IMR-90 (cell line): ENCODE measurements at regions of chr19 and their contacts with region 1.

Region 1: DNA sequence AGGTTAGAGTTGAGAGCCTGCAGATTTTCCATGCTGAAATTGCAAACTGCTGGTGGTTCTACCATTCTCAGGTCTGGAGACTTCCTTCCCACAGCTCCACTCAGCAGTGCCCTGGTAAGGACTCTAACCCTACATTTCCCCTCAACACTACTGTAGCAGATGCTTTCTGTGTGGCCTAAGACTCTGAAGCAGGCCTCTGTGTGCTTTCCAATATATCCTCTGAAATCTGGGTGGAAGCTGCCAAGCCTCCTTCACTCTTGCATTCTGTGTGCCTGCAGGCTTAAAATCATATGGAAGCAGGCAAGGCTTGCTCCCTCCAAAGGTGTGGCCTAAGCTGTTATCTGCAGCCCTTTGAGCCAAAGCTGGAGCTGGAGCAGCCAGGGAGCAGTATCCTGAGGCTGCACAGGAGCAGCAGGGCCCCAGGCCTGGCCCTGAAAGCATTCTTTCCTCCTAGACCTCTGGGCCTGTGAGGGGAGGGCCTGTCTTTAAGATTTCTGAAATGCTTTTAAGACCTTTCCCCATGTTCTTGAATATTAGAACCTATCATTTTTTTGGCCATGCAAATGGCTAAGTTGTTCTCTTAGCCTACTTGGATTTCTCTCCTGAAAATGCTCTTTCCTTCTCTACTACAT is 134.1 kb upstream of the TSHZ3 start:
- DNase-seq: no peak
- ATAC-seq: no peak
- H3K4me3 ChIP-seq: no peak overlapping the region
- H3K27ac ChIP-seq: no peak overlapping the region
- H3K4me1 ChIP-seq: no peaks in the 10 kb centered on the region
- H3K27me3 ChIP-seq: no peaks in the 10 kb centered on the region
- CTCF ChIP-seq: no peak
- POLR2A ChIP-seq: no peak
- RAD21 ChIP-seq: no peak

Region 2: GRCh38 chr19:31285744-31286143 is 197.6 kb before region 1 on chr19:
- CTCF ChIA-PET with region 1: no interaction called
- POLR2A ChIA-PET with region 1: no interaction called
- dilution Hi-C with region 1: no loop called
- in situ Hi-C with region 1: no loop called
- intact Hi-C with region 1: no loop called
- DNase-seq: peak; percentile 64
- ATAC-seq: peak; percentile 69
- H3K4me3 ChIP-seq: no peak overlapping the region
- H3K27ac ChIP-seq: peak overlapping the region; percentile 10; the same call in 1 of the 2 replicates
- H3K4me1 ChIP-seq: peaks cover 12% of the 10 kb centered on the region
- H3K27me3 ChIP-seq: no peaks in the 10 kb centered on the region
- CTCF ChIP-seq: no peak
- POLR2A ChIP-seq: no peak
- RAD21 ChIP-seq: no peak

Region 3: GRCh38 chr19:31504221-31504620 is 20.9 kb after region 1 on chr19:
- CTCF ChIA-PET with region 1: no interaction called
- POLR2A ChIA-PET with region 1: no interaction called
- dilution Hi-C with region 1: no loop called
- in situ Hi-C with region 1: no loop called
- intact Hi-C with region 1: loop called (anchors 1 kb)
- DNase-seq: no peak
- ATAC-seq: no peak
- H3K4me3 ChIP-seq: no peak overlapping the region
- H3K27ac ChIP-seq: no peak overlapping the region
- H3K4me1 ChIP-seq: no peaks in the 10 kb centered on the region
- H3K27me3 ChIP-seq: peaks cover 3% of the 10 kb centered on the region; the same call in 1 of the 2 replicates
- CTCF ChIP-seq: no peak
- POLR2A ChIP-seq: no peak
- RAD21 ChIP-seq: no peak

Region 4: GRCh38 chr19:31560086-31561060 is 77.0 kb after region 1 on chr19:
- CTCF ChIA-PET with region 1: no interaction called
- POLR2A ChIA-PET with region 1: no interaction called
- dilution Hi-C with region 1: no loop called
- in situ Hi-C with region 1: no loop called
- intact Hi-C with region 1: no loop called
- DNase-seq: peak; percentile 11
- ATAC-seq: peak; percentile 21; the same call in 1 of the 2 replicates
- H3K4me3 ChIP-seq: no peak overlapping the region
- H3K27ac ChIP-seq: no peak overlapping the region
- H3K4me1 ChIP-seq: no peaks in the 10 kb centered on the region
- H3K27me3 ChIP-seq: no peaks in the 10 kb centered on the region; the same call in 1 of the 2 replicates
- CTCF ChIP-seq: no peak
- POLR2A ChIP-seq: no peak
- RAD21 ChIP-seq: no peak